ENCODE measurements at regions of chr6 and their contacts with region 1.

Region 1: DNA sequence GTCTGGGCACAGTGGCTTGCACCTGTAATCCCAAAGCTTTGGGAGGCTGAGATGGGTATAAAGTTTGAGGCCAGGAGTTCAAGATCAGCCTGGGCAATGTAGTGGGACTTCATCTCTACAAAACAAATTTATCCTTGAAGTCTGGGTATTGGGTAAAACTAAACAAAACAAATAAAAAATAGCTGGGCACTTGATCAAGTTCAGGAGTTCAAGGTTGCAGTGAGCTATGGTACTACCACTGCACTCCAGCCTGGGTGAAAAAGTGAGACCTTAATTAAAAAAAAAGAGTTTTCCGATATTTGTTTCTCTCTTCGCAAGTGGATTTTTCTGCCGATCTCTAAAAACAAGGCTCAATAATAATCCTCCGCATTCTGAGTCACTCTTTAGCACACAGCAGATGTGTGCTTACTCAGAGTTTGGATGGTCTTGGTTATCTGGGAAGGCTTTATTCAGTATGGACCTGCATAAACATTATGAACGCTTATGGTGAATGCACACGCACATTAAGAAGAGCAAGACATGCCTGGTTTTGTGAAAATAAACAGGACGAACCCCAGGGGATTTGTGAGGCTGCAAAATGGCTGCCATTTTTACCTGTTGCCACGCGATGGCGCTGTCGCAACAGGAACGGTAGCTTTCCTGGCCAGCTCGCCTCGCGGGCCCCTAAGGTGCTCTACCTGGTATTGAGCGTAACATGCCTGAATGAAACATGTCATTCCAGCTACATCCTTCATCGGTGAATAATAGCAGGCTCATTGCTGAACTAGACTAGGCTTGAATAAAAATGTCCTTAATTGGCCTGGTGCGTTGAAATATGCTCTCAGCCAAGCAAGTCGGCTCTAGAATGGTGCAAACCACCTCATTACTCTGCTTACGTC is 6.0 kb downstream of the OPN5 start:
- DNase-seq: peak; percentile 40
- CTCF ChIP-seq: peak; percentile 87

Region 2: DNA sequence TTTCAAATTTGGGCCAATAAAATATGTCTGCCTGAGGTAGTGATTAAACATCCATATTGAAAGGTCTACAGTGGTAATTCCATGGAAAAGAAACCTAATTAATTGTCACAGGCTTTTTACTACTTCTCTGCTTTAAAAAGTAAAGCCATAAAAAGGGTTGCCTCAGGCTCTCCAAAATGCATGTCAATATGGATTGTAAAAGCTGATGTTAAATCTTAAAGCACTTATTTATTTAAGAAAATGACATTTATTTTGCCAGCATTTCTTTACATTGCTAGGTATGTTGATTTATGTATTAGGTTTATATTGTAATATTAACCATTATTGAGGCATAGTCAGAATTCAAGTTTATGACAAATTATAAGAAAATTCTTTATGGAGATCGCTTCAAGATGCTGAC is 127.2 kb after region 1 on chr6:
- in situ Hi-C with region 1: no loop called
- DNase-seq: no peak
- CTCF ChIP-seq: no peak

Region 3: DNA sequence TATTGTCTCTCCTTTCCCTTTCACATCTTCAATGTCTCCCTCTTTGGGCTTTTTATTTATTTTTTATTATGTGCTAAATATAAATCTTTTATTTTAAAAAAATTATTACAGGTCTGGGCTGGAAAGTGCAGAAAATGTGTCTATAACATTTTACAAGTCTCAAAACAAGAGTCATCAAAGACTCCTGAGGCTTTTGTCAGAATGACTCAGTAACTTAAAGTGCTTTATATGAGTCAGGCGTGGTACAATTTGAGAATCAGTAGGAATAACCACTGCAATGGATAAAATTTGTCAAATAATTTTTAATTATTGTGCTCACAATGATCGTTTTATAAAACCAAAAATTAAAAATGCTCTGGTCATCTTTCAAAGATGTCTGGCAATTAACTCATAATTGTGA is 1481.3 kb after region 1 on chr6:
- in situ Hi-C with region 1: no loop called
- DNase-seq: no peak
- CTCF ChIP-seq: no peak

Region 4: GRCh38 chr6:49409951-49410542 is 1622.2 kb after region 1 on chr6:
- in situ Hi-C with region 1: loop called (anchors 25 kb)
- DNase-seq: peak; percentile 35
- CTCF ChIP-seq: peak; percentile 77

Measured in GM13976 (cell line).